Left cardiac atrium (tissue), 4 donors: ENCODE measurements at regions of chr6 and their contacts with region 1.

Region 1: DNA sequence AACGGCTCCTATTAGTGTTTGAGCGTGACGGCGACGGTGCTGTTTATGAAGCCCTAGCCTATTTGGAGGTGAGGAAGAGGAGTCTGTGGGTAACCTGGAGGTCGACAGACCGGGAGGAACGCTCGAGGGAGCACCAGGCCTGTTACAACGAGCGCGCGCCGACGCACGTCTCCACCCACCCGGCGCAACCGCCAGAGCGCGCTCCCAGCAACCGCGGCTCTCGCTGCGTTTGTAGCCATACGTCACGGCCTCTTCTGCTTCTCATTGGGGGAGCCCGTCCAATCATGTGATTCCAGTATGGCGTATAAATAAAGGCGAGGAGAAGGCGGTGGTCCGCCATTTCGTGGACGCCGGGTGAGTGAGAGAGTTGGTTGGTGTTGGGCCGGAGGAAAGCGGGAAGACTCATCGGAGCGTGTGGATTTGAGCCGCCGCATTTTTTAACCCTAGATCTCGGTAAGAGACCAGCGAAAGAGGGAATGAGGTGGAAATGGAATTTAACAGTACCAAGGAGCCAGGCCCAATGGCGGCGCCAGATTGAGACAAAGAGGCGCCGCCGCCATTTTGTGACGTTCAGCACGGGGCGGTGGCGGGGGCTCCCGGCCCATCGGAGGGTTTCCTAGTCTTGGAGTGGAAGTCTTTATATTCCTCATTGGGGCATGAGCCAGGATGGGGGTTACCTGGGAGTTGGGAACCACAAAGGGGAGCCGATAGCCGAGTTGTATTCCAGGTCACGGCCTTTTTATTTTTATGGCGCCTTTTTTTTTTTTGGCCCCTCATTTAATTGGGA is at the start of gene SRSF3:
- DNase-seq: peak; percentile 97
- ATAC-seq: peak; percentile 97 to 98
- total RNA-seq, gene SRSF3: 128 to 201 TPM

Region 2: DNA sequence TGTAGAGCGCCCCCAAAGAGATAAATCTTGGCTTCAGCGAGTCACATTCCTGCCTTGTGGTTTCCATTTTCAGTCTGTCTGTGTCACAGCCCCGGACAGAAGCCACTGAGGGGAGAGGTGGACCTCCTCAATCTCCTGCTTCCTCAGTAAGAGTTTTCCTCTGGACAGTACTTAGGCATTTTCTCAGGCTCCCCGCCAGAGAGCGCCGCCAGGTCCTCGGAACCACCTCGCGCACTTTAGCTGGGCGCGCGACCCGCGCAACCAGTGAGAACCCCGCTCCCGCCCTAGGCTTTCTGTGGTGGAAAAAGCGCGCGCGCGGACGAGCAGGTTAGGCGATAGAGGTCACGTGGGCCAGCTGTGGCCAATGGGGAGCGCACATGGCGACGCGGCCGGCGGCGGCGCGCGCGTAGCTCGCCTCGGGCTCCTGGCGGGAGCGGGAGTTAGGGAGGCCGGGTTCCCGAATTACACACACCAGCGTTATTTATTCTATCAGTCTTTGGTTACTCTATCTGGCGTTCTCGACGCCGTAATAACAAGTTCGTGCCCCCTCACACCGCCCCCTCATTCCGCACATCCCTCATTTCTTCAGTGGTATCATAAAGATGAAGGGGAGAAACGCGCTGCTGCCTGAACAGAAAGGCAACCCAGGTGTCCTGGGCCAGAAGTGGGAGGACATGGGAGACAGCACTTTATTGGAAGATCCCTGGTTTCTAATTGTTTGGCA is 171.0 kb before region 1 on chr6:
- intact Hi-C with region 1: loop called in 1 of 2 experiments (anchors 5 kb)
- DNase-seq: peak; percentile 100
- ATAC-seq: peak; percentile 100

Region 3: DNA sequence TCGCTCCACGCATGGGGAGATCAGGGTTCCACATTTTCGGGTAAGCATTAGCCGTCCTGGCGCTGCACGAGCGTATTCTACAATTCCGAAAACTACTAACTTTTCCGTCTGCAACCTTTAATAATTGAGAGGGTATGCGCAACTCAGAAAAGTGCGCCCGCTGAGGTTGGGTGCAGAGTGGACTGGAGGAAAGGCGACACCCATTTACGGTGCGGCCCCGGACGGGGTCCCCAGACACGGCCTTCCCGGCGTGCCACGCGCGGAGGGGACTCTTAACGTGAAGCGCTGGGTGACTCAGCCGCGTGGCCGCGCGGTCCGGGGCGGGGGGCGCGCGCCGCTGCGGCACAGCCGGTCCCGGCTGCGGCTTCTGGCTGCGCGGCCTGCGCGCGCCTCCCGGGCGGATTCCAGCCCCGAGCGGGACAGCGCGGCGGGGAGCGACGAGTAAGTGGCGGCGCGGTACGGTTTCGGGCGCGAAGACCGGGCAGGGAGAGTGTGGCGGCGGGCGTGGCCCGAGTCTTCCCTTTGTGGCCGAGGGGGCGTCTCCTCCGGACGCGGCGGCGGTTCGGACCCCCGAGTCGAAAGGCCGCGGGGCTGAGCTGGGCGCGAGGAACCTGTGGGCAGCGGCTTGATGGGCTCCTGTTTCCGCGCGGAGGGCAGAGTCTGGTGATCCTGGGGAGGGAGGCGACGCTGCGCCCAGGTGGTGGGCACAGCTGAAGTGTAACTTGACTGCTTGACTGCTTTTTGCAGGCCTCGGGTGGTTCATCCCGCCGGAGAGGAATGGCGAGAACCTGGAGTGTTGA is 151.4 kb before region 1 on chr6 and contains the starts of genes KCTD20 and PXT1:
- intact Hi-C with region 1: loop called in 1 of 2 experiments (anchors 5 kb)
- DNase-seq: peak; percentile 92
- ATAC-seq: peak; percentile 91 to 95
- total RNA-seq, gene KCTD20: 26.7 to 33.7 TPM
- total RNA-seq, gene PXT1: 0.26 TPM in 1 of 2 donors, not detected in the other

Region 4: GRCh38 chr6:36546920-36547645 is 47.1 kb before region 1 on chr6 and contains the start of gene STK38:
- intact Hi-C with region 1: loop called in 1 of 2 experiments (anchors 2 kb)
- DNase-seq: peak; percentile 93
- ATAC-seq: peak; percentile 97 to 98
- total RNA-seq, gene STK38: 20.8 to 27.4 TPM